Naive thymus-derived CD8-positive, alpha-beta T cell (primary cell): ENCODE measurements at regions of chr11 and their contacts with region 1.

Region 1: DNA sequence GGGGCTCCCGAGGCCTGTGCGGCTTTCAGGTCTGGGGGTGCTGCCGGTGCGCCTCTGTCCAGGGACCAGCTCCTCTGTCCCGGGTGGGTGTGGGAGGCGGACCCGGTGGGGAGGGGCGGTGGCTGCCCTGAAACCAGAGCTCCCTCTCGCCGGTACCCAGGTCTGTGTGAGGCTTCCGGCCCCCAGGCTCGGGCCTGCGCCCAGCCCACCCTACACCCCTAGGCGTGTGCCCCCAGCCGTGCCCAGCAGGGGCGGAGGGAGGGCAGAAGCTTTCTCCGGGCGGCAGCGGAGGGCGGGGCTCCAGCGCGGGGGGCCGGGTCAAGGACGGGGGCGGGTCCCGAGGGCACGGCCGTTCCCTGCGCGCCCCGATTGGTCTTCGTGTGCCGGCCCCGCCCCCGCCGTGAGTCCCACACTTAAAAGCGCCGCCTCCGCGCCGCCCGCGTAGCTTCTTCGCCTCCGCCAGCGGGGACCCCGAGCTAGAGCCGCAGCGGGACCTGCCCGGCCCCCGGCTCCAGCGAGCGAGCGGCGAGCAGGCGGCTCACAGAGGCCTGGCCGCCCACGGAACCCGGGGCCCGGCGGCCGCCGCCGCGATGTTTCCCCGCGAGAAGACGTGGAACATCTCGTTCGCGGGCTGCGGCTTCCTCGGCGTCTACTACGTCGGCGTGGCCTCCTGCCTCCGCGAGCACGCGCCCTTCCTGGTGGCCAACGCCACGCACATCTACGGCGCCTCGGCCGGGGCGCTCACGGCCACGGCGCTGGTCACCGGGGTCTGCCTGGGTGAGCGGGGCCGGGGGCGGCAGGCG is 616 bp downstream of the PNPLA2 start:
- DNase-seq: peak; percentile 87 to 98 (median 93)
- ATAC-seq: peak; percentile 71 to 72
- H3K4me3 Mint-ChIP-seq: peak overlapping the region; percentile 77 to 92 (median 86)
- H3K27ac Mint-ChIP-seq: peak overlapping the region in 9 of 10 donors; percentile 57 to 95 (median 89)
- H3K4me1 Mint-ChIP-seq: peaks cover 4 to 20% (median 20%) of the 10 kb centered on the region in 4 donors
- H3K27me3 Mint-ChIP-seq: peaks cover 0 to 2% (median 0%) of the 10 kb centered on the region in 5 donors

Region 2: GRCh38 chr11:777288-778255 is 41.8 kb before region 1 on chr11 and contains the start of gene GATD1:
- POLR2A ChIA-PET with region 1: interaction called, 10 read pairs
- DNase-seq: peak; percentile 86 to 99 (median 93)
- ATAC-seq: peak; percentile 86 to 89
- H3K4me3 Mint-ChIP-seq: peak within 1 kb of the TSS; percentile 72 to 92 (median 82)
- H3K27ac Mint-ChIP-seq: peak within 1 kb of the TSS in 8 of 10 donors; percentile 43 to 90 (median 80)
- H3K4me1 Mint-ChIP-seq: peaks cover 5 to 42% (median 22%) of the 10 kb centered on the region in 4 donors
- H3K27me3 Mint-ChIP-seq: no peaks in the 10 kb centered on the region
- polyA plus RNA-seq, gene GATD1: 7.2 to 20.7 (median 12.8) TPM

Region 3: DNA sequence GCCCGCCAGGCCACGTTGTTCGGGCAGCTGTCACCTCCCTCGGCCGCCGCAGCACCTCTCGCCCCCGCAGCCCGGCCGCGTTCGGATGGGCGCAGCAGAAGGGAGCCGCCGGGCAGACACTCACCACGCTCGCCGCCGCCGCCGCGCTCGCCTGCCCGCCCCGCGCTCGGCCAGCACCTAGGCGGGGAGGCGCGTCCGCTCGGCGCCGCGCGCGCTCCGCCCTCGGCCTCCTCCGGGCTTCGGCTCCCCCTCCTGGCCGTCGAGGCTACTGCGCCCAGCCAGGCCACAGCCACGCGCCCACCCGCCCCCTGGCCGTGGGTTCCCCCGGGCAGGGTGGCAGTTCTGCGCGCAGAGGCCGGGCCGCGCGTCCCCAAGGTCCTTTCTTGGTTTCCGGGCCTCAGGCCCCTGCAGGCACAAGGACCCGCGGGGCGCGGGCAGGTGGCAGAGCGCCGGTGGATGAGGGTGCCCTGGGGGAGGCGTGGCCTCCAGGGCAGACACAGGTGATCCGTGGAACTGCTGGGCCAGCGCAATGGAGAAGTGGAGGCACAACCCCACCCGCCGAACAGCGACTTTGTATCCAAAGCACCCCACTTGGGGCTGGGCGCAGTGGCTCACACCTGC is 21.1 kb before region 1 on chr11 and contains the start of gene SLC25A22:
- POLR2A ChIA-PET with region 1: interaction called, 67 read pairs
- DNase-seq: peak; percentile 71 to 89 (median 84)
- ATAC-seq: peak; percentile 57 to 58
- H3K4me3 Mint-ChIP-seq: peak within 1 kb of the TSS; percentile 84 to 97 (median 90)
- H3K27ac Mint-ChIP-seq: peak within 1 kb of the TSS; percentile 82 to 98 (median 94)
- H3K4me1 Mint-ChIP-seq: peaks cover 4 to 29% (median 20%) of the 10 kb centered on the region in 4 donors
- H3K27me3 Mint-ChIP-seq: no peaks in the 10 kb centered on the region
- polyA plus RNA-seq, gene SLC25A22: 6.4 to 16.4 (median 6.5) TPM

Region 4: DNA sequence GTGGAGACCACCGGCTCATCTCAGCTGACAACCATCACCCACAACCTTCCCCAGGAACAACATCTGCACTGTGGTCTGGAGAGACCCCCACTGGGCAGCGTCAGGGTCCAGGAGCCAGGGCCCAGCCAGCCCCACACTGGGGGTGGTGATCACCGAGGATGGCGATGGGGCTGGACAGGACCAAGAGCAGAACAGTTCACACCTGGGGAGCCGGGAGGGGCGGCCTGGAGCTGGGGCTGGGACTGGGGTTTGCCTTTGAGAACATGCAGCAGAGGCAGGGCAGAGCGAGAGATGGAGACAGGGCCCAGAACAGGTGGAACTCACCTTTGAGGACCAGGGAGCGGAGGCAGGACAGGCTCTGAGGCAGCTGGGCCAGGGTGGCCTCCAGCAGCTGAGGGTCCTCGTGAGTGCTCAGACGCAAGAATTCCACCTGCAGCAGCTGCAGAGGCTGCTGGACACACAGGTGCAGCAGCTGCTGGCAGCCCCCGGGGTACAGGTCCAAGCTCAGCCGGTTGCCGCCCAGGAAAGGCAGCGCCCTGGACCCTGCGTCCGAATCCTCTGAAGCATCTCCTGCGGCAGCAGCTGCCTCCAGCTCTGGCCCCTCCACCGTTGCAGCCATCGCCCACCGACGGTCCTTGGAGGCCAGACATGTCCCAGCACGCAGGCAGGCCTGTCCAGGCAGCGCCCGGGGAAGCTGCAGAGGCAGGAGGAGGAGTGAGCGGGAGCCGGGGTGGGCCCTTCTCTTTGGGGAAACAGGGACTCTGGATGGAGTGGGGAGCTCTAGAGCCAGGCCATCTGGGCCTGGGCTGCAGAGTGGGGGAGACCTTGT is 15.3 kb before region 1 on chr11:
- POLR2A ChIA-PET with region 1: interaction called, 80 read pairs
- DNase-seq: no peak
- ATAC-seq: no peak
- H3K4me3 Mint-ChIP-seq: peak overlapping the region; percentile 67 to 86 (median 75)
- H3K27ac Mint-ChIP-seq: peak overlapping the region in 8 of 10 donors; percentile 56 to 89 (median 72)
- H3K4me1 Mint-ChIP-seq: peaks cover 5 to 36% (median 17%) of the 10 kb centered on the region in 4 donors
- H3K27me3 Mint-ChIP-seq: no peaks in the 10 kb centered on the region

Region 5: GRCh38 chr11:832321-833113 is 13.2 kb after region 1 on chr11 and contains the start of gene CD151:
- POLR2A ChIA-PET with region 1: interaction called, 127 read pairs
- DNase-seq: peak in 2 of 10 donors; percentile 61 to 62
- ATAC-seq: peak; percentile 56 to 60
- H3K4me3 Mint-ChIP-seq: peak within 1 kb of the TSS; percentile 60 to 83 (median 72)
- H3K27ac Mint-ChIP-seq: peak within 1 kb of the TSS in 3 of 10 donors; percentile 21 to 25 (median 24)
- H3K4me1 Mint-ChIP-seq: peaks cover 7 to 48% (median 41%) of the 10 kb centered on the region in 4 donors
- H3K27me3 Mint-ChIP-seq: peaks cover 0 to 26% (median 13%) of the 10 kb centered on the region in 5 donors
- polyA plus RNA-seq, gene CD151: 9.4 to 11.2 (median 10.2) TPM

Region 6: GRCh38 chr11:842370-843002 is 23.2 kb after region 1 on chr11 and contains the starts of genes POLR2L and TSPAN4:
- POLR2A ChIA-PET with region 1: interaction called, 127 read pairs
- DNase-seq: peak; percentile 68 to 98 (median 84)
- ATAC-seq: peak; percentile 78 to 81
- H3K4me3 Mint-ChIP-seq: peak within 1 kb of the TSS; percentile 78 to 91 (median 85)
- H3K27ac Mint-ChIP-seq: peak within 1 kb of the TSS in 9 of 10 donors; percentile 62 to 83 (median 75)
- H3K4me1 Mint-ChIP-seq: peaks cover 11 to 41% (median 36%) of the 10 kb centered on the region in 4 donors
- H3K27me3 Mint-ChIP-seq: peaks cover 0 to 1% (median 0%) of the 10 kb centered on the region in 5 donors
- polyA plus RNA-seq, gene POLR2L: 96.5 to 102 (median 99.7) TPM
- polyA plus RNA-seq, gene TSPAN4: 7.2 to 12.8 (median 8.3) TPM

Region 7: GRCh38 chr11:910589-911195 is 91.4 kb after region 1 on chr11 and contains the start of gene CHID1:
- POLR2A ChIA-PET with region 1: interaction called, 11 read pairs
- DNase-seq: peak; percentile 51 to 84 (median 74)
- ATAC-seq: peak; percentile 94
- H3K4me3 Mint-ChIP-seq: peak within 1 kb of the TSS; percentile 86 to 97 (median 92)
- H3K27ac Mint-ChIP-seq: peak within 1 kb of the TSS; percentile 75 to 90 (median 87)
- H3K4me1 Mint-ChIP-seq: peaks cover 14 to 29% (median 20%) of the 10 kb centered on the region in 4 donors
- H3K27me3 Mint-ChIP-seq: no peaks in the 10 kb centered on the region
- polyA plus RNA-seq, gene CHID1: 50.2 to 61.5 (median 54.7) TPM